Right cardiac atrium (tissue), 5 donors: ENCODE measurements at regions of chr6 and their contacts with region 1.

Region 1: DNA sequence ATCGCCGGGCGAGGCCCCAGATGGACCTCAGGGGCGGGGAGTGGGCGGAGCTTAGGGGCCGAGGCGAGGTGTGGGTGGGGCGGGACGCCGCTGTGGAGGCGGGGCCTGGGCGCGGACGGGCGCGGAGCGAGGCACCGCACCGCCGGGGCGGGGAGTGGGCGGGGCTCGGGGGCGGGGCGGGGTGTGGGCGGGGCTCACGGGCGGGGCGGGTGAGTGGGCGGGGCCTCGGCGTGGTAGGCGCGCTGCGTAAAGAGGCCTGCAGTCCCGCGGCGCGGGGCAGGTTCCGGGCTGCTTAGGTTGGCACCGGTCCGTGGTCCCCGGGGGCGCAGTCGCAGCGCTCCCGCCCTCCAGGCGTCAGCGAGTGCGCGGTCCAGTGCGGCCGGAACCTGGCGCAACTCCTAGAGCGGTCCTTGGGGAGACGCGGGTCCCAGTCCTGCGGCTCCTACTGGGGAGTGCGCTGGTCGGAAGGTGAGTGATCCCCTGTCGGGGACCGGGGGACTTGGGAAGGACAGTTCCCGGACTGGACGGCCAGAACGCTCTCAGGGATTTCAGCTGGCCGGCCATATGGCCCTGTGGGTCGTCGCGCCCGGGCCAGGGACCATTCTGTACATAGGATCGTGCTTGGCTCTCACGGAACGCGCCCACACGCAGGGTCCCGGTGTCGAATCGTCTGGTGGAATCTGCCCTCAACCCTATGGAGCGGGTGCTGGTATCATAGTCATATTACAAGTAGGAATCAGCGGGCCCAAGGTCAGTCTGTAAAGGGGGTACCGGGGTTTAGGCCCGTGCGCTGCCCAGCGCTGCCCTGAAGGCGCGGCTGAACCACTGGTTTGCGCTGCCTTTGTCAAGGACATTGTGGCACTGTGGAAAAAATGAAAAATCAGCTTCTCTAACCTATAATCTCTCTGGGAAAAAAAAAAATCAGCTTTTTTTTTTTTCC is at the start of gene NQO2:
- DNase-seq: peak; percentile 95 to 98 (median 98)
- ATAC-seq: peak; percentile 94 to 96
- H3K4me3 ChIP-seq: peak within 1 kb of the TSS; percentile 74
- H3K27ac ChIP-seq: peak within 1 kb of the TSS; percentile 69
- H3K4me1 ChIP-seq: peaks cover 2% of the 10 kb centered on the region
- H3K27me3 ChIP-seq: no peaks in the 10 kb centered on the region
- total RNA-seq, gene NQO2: 38.1 to 60.6 (median 46.8) TPM

Region 2: DNA sequence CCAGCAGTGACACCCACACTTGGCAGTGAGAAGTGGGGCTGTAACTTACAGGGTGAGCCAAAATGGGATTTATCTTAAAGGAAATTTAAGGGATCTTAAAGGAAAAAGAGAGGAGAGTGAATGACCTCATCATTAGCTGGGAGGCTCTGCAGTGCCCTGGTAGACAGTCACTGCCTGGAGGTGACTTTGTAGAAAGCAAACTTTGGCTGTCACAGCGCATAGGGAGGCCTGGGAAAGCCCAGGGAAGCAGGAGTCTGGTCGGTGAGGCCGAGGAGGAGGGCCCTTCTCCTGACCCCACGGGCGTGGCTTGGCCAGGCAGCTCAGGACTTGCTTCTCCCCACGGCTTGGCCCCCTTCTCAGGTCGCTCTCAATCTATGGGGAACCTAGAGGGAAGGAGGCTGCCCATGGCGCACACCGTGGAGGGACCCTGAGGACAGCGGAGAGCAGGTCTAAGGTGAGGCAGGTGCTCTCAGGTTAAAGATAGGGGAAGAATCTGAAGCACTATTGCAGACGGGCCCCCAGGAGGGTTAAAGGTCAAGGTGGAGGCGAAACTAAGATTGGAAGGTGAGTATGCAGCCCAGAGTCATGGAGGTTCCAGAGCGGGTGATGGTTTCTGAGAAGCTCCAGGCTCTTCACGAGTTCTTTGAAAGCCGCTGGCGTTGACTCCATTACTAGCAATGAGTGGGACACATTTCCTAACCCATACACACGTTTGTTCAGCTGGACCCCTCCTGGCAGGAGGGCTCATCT is 52.8 kb after region 1 on chr6:
- intact Hi-C with region 1: loop called in 2 of 4 experiments (anchors 1 to 2 kb)
- DNase-seq: peak in 1 of 3 donors; percentile 64
- ATAC-seq: no peak
- H3K4me3 ChIP-seq: no peak overlapping the region
- H3K27ac ChIP-seq: no peak overlapping the region
- H3K4me1 ChIP-seq: peaks cover 2% of the 10 kb centered on the region
- H3K27me3 ChIP-seq: no peaks in the 10 kb centered on the region

Region 3: GRCh38 chr6:3058957-3059356 is 59.1 kb after region 1 on chr6:
- intact Hi-C with region 1: loop called (anchors 1 to 5 kb)
- DNase-seq: no peak
- ATAC-seq: no peak
- H3K4me3 ChIP-seq: no peak overlapping the region
- H3K27ac ChIP-seq: no peak overlapping the region
- H3K4me1 ChIP-seq: no peaks in the 10 kb centered on the region
- H3K27me3 ChIP-seq: no peaks in the 10 kb centered on the region

Region 4: DNA sequence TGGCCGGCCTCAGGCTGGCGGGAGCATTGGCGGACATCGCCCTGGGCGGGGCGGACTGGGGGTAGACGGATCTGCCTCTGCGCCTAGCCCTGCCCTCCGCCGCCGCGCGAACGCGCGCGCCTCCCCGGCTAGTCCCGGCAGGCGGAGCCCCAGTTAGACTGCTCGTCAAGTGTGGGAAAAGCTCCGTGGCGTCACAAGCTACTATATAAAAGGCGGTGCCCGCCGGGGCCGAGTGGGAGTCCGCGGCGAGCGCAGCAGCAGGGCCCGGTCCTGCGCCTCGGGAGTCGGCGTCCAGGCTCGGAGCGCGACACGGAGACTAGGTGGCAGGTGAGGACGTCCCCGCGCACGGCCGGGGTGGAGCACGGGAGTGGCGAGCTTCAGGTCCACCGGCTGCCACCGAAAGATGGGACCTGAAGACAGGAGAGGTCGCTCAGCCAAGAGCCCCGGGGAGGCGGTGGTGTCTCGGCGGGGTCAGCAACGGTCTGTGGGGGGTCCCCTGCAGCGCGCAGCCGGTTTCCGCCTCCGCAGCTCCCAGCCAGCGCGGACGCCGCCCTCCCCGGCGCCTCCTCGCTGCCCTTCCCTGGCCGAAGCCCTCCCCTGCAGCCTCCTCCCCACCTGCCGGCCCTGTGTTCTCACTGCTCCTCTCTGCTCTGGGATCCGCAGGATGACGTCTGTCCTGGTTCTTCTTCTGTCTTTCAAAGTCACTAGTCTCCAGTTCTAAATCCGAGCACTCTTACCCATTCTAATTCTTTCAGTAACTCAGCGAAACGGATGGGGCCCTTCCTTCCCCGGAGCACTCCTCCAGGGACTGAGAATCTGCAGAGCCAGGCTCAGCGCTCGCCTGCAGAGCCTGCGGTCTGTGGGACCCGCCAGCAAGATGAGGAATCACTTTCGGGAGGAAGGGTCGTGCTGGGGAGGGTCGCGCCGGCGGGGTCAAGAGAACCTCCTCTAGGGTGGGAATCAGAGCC is 64.1 kb after region 1 on chr6:
- intact Hi-C with region 1: loop called in 2 of 4 experiments (anchors 2 to 5 kb)
- DNase-seq: peak; percentile 98 to 99 (median 99)
- ATAC-seq: peak; percentile 96
- H3K4me3 ChIP-seq: peak overlapping the region; percentile 82
- H3K27ac ChIP-seq: peak overlapping the region; percentile 99
- H3K4me1 ChIP-seq: no peaks in the 10 kb centered on the region
- H3K27me3 ChIP-seq: no peaks in the 10 kb centered on the region

Region 5: GRCh38 chr6:3125815-3126214 is 125.9 kb after region 1 on chr6:
- intact Hi-C with region 1: no loop called
- DNase-seq: no peak
- ATAC-seq: no peak
- H3K4me3 ChIP-seq: no peak overlapping the region
- H3K27ac ChIP-seq: no peak overlapping the region
- H3K4me1 ChIP-seq: no peaks in the 10 kb centered on the region
- H3K27me3 ChIP-seq: no peaks in the 10 kb centered on the region